ENCODE measurements at regions of chr7 and their contacts with region 1.

Region 1: DNA sequence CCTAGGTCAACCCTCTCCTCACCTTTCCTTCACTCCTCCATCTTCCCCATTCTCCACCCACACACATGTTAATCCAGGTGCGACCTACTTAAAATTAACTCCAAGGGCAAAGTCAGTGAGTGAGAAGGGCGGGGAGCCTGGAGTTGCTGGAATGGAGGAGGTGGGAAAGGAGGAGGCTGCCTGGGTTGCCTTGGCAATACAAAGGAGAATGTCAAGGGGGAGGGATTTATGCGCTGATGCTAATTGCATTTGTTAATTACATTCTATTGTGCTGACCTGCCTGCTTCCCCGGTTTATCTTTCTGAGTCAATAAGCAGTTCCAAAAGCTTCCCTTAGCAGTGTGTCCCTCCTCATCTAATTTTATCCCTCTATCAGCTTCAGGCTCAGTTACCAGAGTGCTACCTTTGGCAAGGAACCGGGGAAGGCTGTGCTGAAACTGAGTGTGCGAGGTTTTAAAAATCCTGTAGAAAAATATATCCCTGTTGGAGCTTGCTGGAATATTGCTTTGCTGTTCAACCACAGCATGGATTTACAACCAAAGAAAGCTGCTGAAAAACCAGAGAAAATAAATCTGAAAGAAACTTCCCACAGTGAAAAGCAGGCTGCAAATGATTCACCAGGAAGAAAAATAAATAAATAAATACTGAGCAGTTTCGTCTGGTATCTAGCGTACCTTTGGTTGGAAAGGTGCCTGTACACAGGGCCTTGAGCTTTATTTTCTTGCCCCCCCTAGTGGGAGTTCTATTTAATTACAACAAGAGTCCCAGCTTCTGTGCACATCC is 113.2 kb upstream of the DGKB start:
- DNase-seq: peak; percentile 75
- ATAC-seq: peak; percentile 98
- H3K4me3 ChIP-seq: no peak overlapping the region
- H3K27ac ChIP-seq: no peak overlapping the region
- H3K4me1 ChIP-seq: no peaks in the 10 kb centered on the region
- H3K27me3 ChIP-seq: no peaks in the 10 kb centered on the region
- CTCF ChIP-seq: peak; percentile 63
- EP300 ChIP-seq: no peak
- POLR2A ChIP-seq: no peak
- RAD21 ChIP-seq: no peak

Region 2: DNA sequence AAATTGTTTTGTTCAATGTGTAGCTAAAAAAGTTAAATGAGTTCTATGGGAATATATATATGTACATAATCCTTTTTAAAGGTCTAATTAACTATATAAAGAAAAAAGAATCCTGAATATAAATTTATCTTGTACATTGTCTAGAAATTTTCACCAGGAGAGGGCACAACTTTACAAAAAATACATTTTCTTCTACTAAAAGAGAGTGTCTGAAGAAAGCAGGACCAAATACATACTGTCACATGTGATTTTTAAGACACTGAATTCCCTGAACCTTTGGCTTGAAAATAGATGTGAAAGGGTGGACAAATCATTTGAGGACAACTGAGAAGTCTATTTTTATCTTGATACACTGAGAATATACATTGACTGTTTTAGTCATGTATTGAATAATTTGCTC is 317.5 kb before region 1 on chr7:
- CTCF ChIA-PET with region 1: no interaction called
- POLR2A ChIA-PET with region 1: no interaction called
- in situ Hi-C with region 1: no loop called
- intact Hi-C with region 1: loop called (anchors 5 kb)
- DNase-seq: no peak
- ATAC-seq: no peak
- H3K4me3 ChIP-seq: no peak overlapping the region
- H3K27ac ChIP-seq: no peak overlapping the region
- H3K4me1 ChIP-seq: no peaks in the 10 kb centered on the region
- H3K27me3 ChIP-seq: no peaks in the 10 kb centered on the region
- CTCF ChIP-seq: no peak
- EP300 ChIP-seq: no peak
- POLR2A ChIP-seq: no peak
- RAD21 ChIP-seq: no peak

Region 3: DNA sequence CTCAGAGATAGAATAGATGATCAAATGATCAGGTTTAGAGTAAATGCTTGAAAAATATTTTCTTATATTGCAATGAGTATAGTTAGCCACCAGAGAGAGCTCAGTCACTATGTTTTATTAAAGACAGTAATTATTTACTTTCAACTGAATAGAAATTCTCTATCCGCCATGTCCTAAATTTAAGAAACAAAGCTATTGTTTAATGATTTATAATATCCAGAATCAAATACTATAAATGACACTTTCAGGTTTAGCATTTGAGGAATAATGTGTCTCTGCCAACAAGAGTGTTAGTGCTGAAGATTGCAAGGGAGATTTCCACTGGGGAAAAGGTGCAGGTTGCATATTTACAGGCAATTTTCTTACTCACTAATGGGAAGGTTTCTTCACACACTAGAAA is 297.9 kb before region 1 on chr7:
- CTCF ChIA-PET with region 1: interaction called, 12 read pairs
- POLR2A ChIA-PET with region 1: no interaction called
- in situ Hi-C with region 1: loop called (anchors 10 kb)
- intact Hi-C with region 1: loop called (anchors 1 kb)
- DNase-seq: no peak
- ATAC-seq: no peak
- H3K4me3 ChIP-seq: no peak overlapping the region
- H3K27ac ChIP-seq: no peak overlapping the region
- H3K4me1 ChIP-seq: no peaks in the 10 kb centered on the region
- H3K27me3 ChIP-seq: no peaks in the 10 kb centered on the region
- CTCF ChIP-seq: 0 out of 2 replicates have a peak, but pooled peaks have one; percentile 8
- EP300 ChIP-seq: no peak
- POLR2A ChIP-seq: no peak
- RAD21 ChIP-seq: no peak